ENCODE measurements at regions of chr2 and their contacts with region 1.

Region 1: GRCh38 chr2:70132244-70133126 is 45.2 kb downstream of the PCBP1 start:
- DNase-seq: peak; percentile 59
- CTCF ChIP-seq: no peak

Region 2: DNA sequence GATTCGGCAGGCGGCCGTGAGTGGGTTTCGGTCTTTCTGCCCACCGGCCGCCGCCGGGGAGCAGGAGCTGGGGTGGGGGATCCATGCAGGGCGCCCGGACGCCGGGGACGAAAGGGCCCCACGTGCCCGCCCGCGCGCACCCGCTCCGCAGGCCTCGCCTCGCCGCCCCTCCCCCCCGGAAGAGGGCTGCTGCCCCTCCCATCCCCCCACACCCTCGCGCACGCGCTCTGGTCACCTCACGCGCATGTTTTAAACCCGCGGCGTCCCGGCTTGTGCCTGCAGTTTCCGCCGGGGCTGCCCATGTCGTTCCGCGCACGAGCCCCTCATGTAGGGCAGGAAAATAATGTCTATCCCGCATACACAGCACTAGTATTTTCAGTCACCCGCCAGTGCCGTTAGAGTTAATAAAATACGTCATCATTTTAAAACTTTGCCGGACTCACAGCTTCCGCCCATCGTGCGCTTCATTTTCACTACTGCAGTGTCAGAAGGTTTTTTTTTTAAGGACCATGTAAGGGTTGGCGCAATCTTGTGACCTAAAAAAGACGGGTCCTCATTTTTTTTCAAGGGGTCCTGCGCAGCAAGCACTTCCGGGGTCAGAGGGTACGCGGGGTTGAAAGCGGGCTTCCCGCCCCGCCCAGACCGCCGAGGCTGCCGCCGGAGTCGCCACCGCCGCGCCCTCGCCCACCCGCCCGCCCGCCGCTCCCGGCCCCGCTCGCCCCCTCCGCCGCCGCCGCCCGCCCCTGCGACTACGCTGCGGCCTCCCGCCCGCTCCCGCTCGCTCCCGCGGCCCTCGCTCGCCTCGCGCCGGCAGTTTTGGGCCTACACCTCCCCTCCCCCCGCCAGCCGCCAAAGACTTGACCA is 45.4 kb before region 1 on chr2 and contains the start of gene PCBP1:
- in situ Hi-C with region 1: loop called (anchors 10 kb)
- DNase-seq: peak; percentile 96
- CTCF ChIP-seq: no peak

Region 3: GRCh38 chr2:70357684-70358071 is 225.2 kb after region 1 on chr2:
- in situ Hi-C with region 1: no loop called
- DNase-seq: no peak
- CTCF ChIP-seq: no peak